ENCODE measurements at regions of chr4 and their contacts with region 1.

Region 1: DNA sequence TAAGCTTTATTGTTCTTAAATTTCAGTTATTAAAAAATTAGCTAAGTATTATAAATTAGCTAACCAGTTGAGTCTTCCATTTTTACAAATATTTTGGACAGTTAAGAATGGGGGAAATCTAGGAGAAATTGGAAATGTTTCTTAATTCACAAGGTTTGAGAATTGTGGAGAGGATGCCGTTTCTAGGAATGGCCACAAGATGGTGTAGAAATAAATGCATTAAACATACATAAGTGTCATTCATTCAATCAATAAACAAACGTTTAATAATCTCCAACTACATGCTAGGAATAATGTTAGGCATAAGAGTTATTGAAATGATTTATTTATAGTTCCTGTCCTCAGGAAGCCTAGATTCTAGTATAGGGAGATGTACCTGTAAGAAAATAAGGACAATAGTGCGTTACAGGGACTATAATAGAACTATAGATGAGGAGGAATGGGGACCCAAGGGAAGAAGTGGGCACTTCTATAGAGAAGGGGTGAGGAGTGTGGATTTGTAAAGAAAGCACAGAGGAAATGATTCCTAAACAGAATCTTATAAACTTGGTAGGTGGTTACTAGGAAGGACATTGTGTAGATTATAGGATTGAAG is 195.7 kb upstream of the ANK2 start:
- DNase-seq: no peak
- ATAC-seq: no peak
- H3K4me3 ChIP-seq: no peak overlapping the region
- H3K27ac ChIP-seq: no peak overlapping the region
- H3K4me1 ChIP-seq: no peaks in the 10 kb centered on the region
- H3K27me3 ChIP-seq: no peaks in the 10 kb centered on the region
- CTCF ChIP-seq: peak; percentile 47 to 62 (median 51)
- POLR2A ChIP-seq: no peak

Region 2: GRCh38 chr4:112747036-112747435 is 106.7 kb before region 1 on chr4:
- intact Hi-C with region 1: no loop called
- DNase-seq: no peak
- ATAC-seq: no peak
- H3K4me3 ChIP-seq: no peak overlapping the region
- H3K27ac ChIP-seq: no peak overlapping the region
- H3K4me1 ChIP-seq: no peaks in the 10 kb centered on the region
- H3K27me3 ChIP-seq: no peaks in the 10 kb centered on the region
- CTCF ChIP-seq: no peak
- POLR2A ChIP-seq: no peak

Region 3: GRCh38 chr4:112938461-112939058 is 84.8 kb after region 1 on chr4:
- intact Hi-C with region 1: loop called in 1 of 2 experiments (anchors 10 kb)
- DNase-seq: no peak
- ATAC-seq: peak; percentile 53 to 71 (median 68)
- H3K4me3 ChIP-seq: no peak overlapping the region
- H3K27ac ChIP-seq: no peak overlapping the region
- H3K4me1 ChIP-seq: no peaks in the 10 kb centered on the region
- H3K27me3 ChIP-seq: no peaks in the 10 kb centered on the region
- CTCF ChIP-seq: peak; percentile 65 to 73 (median 68)
- POLR2A ChIP-seq: no peak

Region 4: DNA sequence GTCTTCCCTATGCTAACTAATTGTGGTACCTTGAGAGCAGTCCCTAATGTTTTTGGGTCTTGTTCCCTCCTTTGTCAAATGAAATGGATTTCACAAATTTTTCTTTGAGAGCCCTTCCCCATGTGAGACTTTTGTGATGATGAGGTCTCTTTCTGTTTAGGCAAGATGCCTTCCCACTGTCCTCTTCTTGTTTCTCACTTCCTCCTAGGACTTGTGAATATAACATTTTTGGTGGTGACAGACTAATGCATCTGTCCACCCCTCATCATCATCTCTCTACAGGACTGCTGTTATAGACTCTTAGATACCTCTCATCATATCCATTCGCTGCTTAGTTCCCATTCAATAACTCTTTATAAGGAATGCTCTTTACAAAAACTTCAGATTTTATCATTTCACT is 187.0 kb after region 1 on chr4:
- intact Hi-C with region 1: no loop called
- DNase-seq: no peak
- ATAC-seq: no peak
- H3K4me3 ChIP-seq: no peak overlapping the region
- H3K27ac ChIP-seq: no peak overlapping the region
- H3K4me1 ChIP-seq: no peaks in the 10 kb centered on the region
- H3K27me3 ChIP-seq: no peaks in the 10 kb centered on the region
- CTCF ChIP-seq: no peak
- POLR2A ChIP-seq: no peak

Measured in right lobe of liver (tissue), 6 donors.